ENCODE measurements at regions of chr15 and their contacts with region 1.

Region 1: GRCh38 chr15:66946578-66947164 is 118.7 kb upstream of the SMAD3 start:
- DNase-seq: peak; percentile 80 to 87
- H3K4me3 ChIP-seq: no peak overlapping the region
- H3K4me1 ChIP-seq: peaks cover 2% of the 10 kb centered on the region; the same call in 1 of the 2 replicates
- H3K27me3 ChIP-seq: no peaks in the 10 kb centered on the region; the same call in 1 of the 2 replicates

Region 2: GRCh38 chr15:66452971-66453580 is 493.6 kb before region 1 on chr15:
- in situ Hi-C with region 1: no loop called
- DNase-seq: no peak
- H3K4me3 ChIP-seq: no peak overlapping the region
- H3K4me1 ChIP-seq: no peaks in the 10 kb centered on the region
- H3K27me3 ChIP-seq: no peaks in the 10 kb centered on the region

Region 3: DNA sequence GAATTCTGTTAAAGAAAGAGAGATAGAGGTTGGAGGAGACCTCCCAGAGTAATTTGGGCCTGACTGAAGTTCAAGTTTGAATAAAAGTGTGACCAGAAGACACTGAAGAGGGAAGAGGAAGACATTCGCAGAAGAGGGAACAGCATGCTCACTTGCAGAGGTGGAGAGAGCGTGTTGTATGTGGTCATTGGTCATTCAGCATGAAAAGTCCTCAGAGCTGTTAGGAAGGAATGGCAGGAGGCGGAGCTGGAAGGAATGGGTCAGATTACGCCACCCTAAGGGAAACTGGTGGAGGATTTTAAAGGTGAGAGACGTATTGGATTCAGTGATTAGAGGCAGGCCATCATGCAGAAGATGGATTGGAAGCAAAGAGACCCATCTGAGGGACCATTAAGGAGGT is 349.5 kb after region 1 on chr15:
- in situ Hi-C with region 1: loop called (anchors 5 kb)
- DNase-seq: no peak
- H3K4me3 ChIP-seq: no peak overlapping the region
- H3K4me1 ChIP-seq: no peaks in the 10 kb centered on the region
- H3K27me3 ChIP-seq: no peaks in the 10 kb centered on the region

Region 4: DNA sequence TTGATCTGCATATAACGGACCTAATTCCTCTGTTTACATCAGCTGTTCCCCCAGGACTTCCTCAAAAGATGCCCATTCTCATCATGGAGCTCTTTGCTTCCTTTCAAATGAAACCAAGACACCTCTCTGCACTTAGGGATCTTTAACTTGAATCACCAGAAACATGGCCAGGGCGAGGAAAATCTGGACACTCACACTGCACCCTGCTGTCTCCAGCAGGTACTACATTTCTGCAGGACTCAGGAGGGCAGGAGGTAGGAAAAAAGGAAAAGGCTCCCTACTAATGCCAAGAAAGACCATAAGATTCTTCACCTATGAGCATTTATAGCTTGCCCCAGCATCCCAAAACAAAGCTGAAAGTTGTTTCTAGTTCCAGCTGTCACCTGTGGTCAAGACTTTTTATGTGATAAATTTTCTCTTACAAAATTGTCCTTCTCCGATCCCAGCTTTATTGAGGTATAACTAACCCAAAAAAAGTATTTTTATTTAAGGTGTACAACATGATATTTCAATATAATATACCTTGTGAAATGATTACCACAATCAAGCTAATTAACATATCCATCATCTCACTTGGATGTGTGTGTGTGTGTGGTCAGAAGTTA is 486.9 kb after region 1 on chr15:
- in situ Hi-C with region 1: loop called (anchors 5 kb)
- DNase-seq: peak; percentile 75 to 82
- H3K4me3 ChIP-seq: no peak overlapping the region
- H3K4me1 ChIP-seq: peaks cover 9% of the 10 kb centered on the region
- H3K27me3 ChIP-seq: no peaks in the 10 kb centered on the region

Region 5: GRCh38 chr15:67839929-67840748 is 893.5 kb after region 1 on chr15 and contains the start of gene RNU6-1:
- in situ Hi-C with region 1: loop called (anchors 5 kb)
- DNase-seq: peak; percentile 99
- H3K4me3 ChIP-seq: peak within 1 kb of the TSS; percentile 74
- H3K4me1 ChIP-seq: peaks cover 31% of the 10 kb centered on the region
- H3K27me3 ChIP-seq: no peaks in the 10 kb centered on the region